ENCODE measurements at regions of chr1 and their contacts with region 1.

Region 1: DNA sequence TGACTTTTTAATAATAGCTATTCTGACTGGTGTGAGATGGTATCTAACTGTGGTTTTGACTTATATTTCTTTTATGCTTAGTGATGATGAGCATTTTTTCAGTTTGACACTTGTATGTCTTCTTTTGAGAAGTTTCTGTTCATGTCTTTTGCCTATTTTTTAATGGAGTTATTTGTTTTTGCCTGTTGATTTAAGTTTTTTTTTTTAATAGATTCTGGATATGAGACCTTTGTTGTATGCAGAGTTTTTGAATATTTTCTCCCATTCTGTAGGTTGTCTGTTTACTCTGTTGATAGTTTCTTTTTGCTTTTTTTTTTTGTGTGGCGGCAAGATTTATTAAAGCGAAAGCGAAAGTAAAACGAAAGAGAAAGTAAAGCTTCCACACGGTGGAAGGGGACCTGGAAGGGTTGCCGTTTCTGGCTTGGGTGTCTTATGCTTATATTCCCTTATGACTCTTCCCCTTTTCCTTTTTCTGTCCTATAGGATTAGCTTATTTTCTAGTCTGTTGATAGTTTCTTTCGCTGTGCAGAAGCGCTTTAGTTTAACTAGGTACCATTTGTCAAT is 67.6 kb downstream of the TBX19 start:
- DNase-seq: peak; percentile 44 to 53 (median 49)
- H3K4me3 ChIP-seq: peak overlapping the region; percentile 51 to 58
- H3K4me3 Mint-ChIP-seq: peak overlapping the region; percentile 77 to 94 (median 90)
- H3K27ac ChIP-seq: peak overlapping the region; percentile 20
- H3K27ac Mint-ChIP-seq: peak overlapping the region; percentile 73 to 96 (median 91)
- H3K4me1 ChIP-seq: peaks cover 16% of the 10 kb centered on the region
- H3K4me1 Mint-ChIP-seq: peaks cover 21 to 45% (median 34%) of the 10 kb centered on the region in 4 donors
- H3K27me3 ChIP-seq: no peaks in the 10 kb centered on the region
- H3K27me3 Mint-ChIP-seq: no peaks in the 10 kb centered on the region

Region 2: DNA sequence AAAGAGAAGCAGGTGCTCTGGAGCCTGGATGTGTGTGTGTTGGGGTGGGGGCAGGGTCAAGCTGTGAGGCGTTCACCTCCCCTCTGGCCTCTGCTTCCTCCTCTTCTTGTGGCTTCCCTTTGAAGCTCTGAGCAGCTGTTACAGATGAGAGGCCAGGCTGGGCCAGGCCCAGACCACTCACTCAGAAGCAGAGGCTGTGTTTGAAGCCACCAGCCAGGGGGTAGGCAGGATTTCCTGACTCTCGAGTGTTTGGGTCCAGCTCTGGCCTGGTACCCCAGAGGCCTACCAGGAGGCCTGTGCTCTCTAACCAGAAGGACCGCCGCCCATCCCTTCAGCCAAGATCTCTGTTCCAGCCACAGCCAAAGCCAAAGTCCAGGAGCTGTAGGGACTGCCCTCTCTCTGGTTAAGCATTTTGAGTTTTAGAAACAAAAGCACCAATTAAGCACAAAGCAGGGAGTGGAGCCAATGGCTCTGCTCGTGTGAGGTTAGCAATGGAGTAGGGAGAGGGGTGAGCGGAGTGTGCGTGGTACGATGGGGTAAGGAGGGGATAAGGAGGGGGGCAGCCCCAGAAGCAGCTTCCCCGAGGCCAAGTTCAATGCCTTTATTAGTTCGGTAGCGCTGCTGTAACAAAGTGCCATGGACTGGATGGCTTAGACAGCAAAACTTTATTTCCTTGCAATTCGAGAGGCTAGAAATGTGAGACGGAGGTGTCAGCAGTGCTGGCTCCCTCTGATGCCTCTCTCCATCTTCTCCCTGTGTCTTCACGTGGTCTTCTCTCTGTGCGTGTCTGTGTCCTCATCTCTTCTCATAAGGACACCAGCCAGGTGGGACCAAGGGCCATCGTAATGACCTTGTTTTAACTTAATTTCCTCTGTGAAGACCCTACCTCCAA is 697.7 kb before region 1 on chr1:
- CTCF ChIA-PET with region 1: no interaction called
- POLR2A ChIA-PET with region 1: no interaction called
- intact Hi-C with region 1: no loop called
- DNase-seq: no peak
- H3K4me3 ChIP-seq: peak overlapping the region in 1 of 2 donors; percentile 12
- H3K4me3 Mint-ChIP-seq: peak overlapping the region in 7 of 8 donors; percentile 63 to 87 (median 75)
- H3K27ac ChIP-seq: peak overlapping the region; percentile 55
- H3K27ac Mint-ChIP-seq: peak overlapping the region; percentile 87 to 95 (median 92)
- H3K4me1 ChIP-seq: peaks cover 98% of the 10 kb centered on the region
- H3K4me1 Mint-ChIP-seq: peaks cover 71 to 92% (median 84%) of the 10 kb centered on the region in 4 donors
- H3K27me3 ChIP-seq: no peaks in the 10 kb centered on the region
- H3K27me3 Mint-ChIP-seq: no peaks in the 10 kb centered on the region

Region 3: GRCh38 chr1:168360151-168361021 is 12.2 kb after region 1 on chr1:
- CTCF ChIA-PET with region 1: interaction called, 543 read pairs
- POLR2A ChIA-PET with region 1: interaction called, 162 read pairs
- intact Hi-C with region 1: loop called (anchors 1 kb)
- DNase-seq: peak in 1 of 5 donors; percentile 55
- H3K4me3 ChIP-seq: no peak overlapping the region
- H3K4me3 Mint-ChIP-seq: peak overlapping the region in 3 of 8 donors; percentile 25 to 48 (median 36)
- H3K27ac ChIP-seq: no peak overlapping the region
- H3K27ac Mint-ChIP-seq: peak overlapping the region in 5 of 7 donors; percentile 79 to 100 (median 90)
- H3K4me1 ChIP-seq: peaks cover 49% of the 10 kb centered on the region
- H3K4me1 Mint-ChIP-seq: peaks cover 27 to 55% (median 44%) of the 10 kb centered on the region in 4 donors
- H3K27me3 ChIP-seq: no peaks in the 10 kb centered on the region
- H3K27me3 Mint-ChIP-seq: no peaks in the 10 kb centered on the region

Region 4: GRCh38 chr1:169106095-169106920 is 758.1 kb after region 1 on chr1 and contains the start of gene ATP1B1:
- CTCF ChIA-PET with region 1: interaction called, 3 read pairs
- POLR2A ChIA-PET with region 1: no interaction called
- intact Hi-C with region 1: loop called (anchors 2 kb)
- DNase-seq: peak; percentile 72 to 84 (median 78)
- H3K4me3 ChIP-seq: peak within 1 kb of the TSS; percentile 57 to 70
- H3K4me3 Mint-ChIP-seq: peak within 1 kb of the TSS; percentile 78 to 97 (median 90)
- H3K27ac ChIP-seq: peak within 1 kb of the TSS; percentile 23
- H3K27ac Mint-ChIP-seq: peak within 1 kb of the TSS; percentile 58 to 88 (median 78)
- H3K4me1 ChIP-seq: peaks cover 27% of the 10 kb centered on the region
- H3K4me1 Mint-ChIP-seq: peaks cover 20 to 49% (median 34%) of the 10 kb centered on the region in 4 donors
- H3K27me3 ChIP-seq: no peaks in the 10 kb centered on the region
- H3K27me3 Mint-ChIP-seq: peaks cover 2 to 4% of the 10 kb centered on the region in 2 donors
- total RNA-seq, gene ATP1B1: 3.3 to 3.5 TPM

Measured in CD4-positive, alpha-beta memory T cell (primary cell).